ENCODE measurements at regions of chr16 and their contacts with region 1.

Region 1: GRCh38 chr16:58556678-58557077 is 41.4 kb downstream of the SETD6 start:
- DNase-seq: no peak
- ATAC-seq: no peak
- H3K4me3 ChIP-seq: no peak overlapping the region
- H3K4me3 Mint-ChIP-seq: no peak overlapping the region
- H3K27ac ChIP-seq: no peak overlapping the region
- H3K27ac Mint-ChIP-seq: peak overlapping the region in 1 of 9 donors; percentile 38
- H3K4me1 ChIP-seq: no peaks in the 10 kb centered on the region
- H3K4me1 Mint-ChIP-seq: peaks cover 0 to 8% (median 3%) of the 10 kb centered on the region in 7 donors
- H3K27me3 ChIP-seq: no peaks in the 10 kb centered on the region
- H3K27me3 Mint-ChIP-seq: no peaks in the 10 kb centered on the region

Region 2: GRCh38 chr16:56681939-56682702 is 1874.6 kb before region 1 on chr16 and contains the start of gene MT1X:
- CTCF ChIA-PET with region 1: no interaction called
- POLR2A ChIA-PET with region 1: no interaction called
- intact Hi-C with region 1: no loop called
- DNase-seq: peak; percentile 77 to 94 (median 88)
- ATAC-seq: peak; percentile 100
- H3K4me3 ChIP-seq: peak within 1 kb of the TSS; percentile 93
- H3K4me3 Mint-ChIP-seq: peak within 1 kb of the TSS; percentile 86 to 99 (median 96)
- H3K27ac ChIP-seq: peak within 1 kb of the TSS; percentile 81
- H3K27ac Mint-ChIP-seq: peak within 1 kb of the TSS; percentile 89 to 99 (median 95)
- H3K4me1 ChIP-seq: peaks cover 13 to 15% of the 10 kb centered on the region in 2 donors
- H3K4me1 Mint-ChIP-seq: peaks cover 0 to 28% (median 25%) of the 10 kb centered on the region in 7 donors
- H3K27me3 ChIP-seq: no peaks in the 10 kb centered on the region
- H3K27me3 Mint-ChIP-seq: peaks cover 0 to 2% (median 0%) of the 10 kb centered on the region in 5 donors
- total RNA-seq, gene MT1X: 15.0 to 70.7 (median 25.9) TPM

Region 3: GRCh38 chr16:58605562-58605961 is 48.9 kb after region 1 on chr16:
- CTCF ChIA-PET with region 1: no interaction called
- POLR2A ChIA-PET with region 1: no interaction called
- intact Hi-C with region 1: loop called in 1 of 2 experiments (anchors 1 kb)
- DNase-seq: no peak
- ATAC-seq: no peak
- H3K4me3 ChIP-seq: no peak overlapping the region
- H3K4me3 Mint-ChIP-seq: no peak overlapping the region
- H3K27ac ChIP-seq: no peak overlapping the region
- H3K27ac Mint-ChIP-seq: no peak overlapping the region
- H3K4me1 ChIP-seq: peaks cover 4% of the 10 kb centered on the region in 2 donors
- H3K4me1 Mint-ChIP-seq: peaks cover 27 to 54% (median 47%) of the 10 kb centered on the region in 7 donors
- H3K27me3 ChIP-seq: no peaks in the 10 kb centered on the region
- H3K27me3 Mint-ChIP-seq: no peaks in the 10 kb centered on the region